ENCODE measurements at regions of chr17 and their contacts with region 1.

Region 1: GRCh38 chr17:47099987-47100711 is 88.9 kb downstream of the CDC27 start:
- DNase-seq: peak; percentile 79 to 88 (median 86)
- H3K4me3 ChIP-seq: peak overlapping the region; percentile 55 to 93 (median 92)
- H3K4me3 Mint-ChIP-seq: peak overlapping the region; percentile 99
- H3K27ac ChIP-seq: peak overlapping the region in 1 of 2 donors; percentile 88
- H3K27ac Mint-ChIP-seq: peak overlapping the region; percentile 84 to 97 (median 94)
- H3K4me1 ChIP-seq: peaks cover 12 to 16% of the 10 kb centered on the region in 2 donors
- H3K4me1 Mint-ChIP-seq: peaks cover 25% of the 10 kb centered on the region
- H3K27me3 ChIP-seq: no peaks in the 10 kb centered on the region
- H3K27me3 Mint-ChIP-seq: peaks cover 0 to 4% (median 0%) of the 10 kb centered on the region in 3 donors
- CTCF ChIP-seq: no peak

Region 2: DNA sequence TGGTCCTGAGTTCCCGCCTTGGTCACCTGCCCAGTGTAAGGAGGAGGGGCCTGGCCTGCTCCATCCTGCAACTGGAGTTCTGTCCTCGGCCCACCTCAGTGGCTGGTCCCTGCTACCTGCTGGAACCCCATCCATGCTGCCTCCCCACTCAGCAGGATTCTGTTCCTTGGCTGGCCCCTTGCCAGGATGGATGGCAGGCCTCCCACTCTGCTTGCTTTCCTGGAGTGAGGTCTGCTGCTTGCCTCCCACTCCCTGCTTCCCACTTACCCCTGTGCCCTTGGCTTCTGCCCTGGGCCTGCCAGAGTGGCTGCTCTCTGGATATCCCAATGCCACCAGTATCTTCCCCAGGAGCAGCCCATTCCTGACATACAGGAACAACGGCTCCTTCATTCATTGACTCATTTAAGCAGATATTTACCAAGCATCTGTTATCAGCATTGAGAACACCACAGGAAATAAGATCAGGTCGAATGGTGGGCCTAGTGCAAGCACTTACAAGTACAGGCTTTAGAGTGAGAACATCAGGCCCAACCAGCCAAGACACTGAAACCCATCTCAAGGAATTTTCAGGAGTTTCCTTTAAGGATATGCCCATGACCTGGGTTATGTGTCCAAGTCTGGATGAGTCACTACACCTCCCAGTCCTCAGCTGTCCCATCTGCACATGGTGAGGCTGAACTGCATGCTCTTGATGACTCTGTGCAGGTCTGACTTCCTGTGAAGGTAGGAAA is 104.1 kb before region 1 on chr17:
- intact Hi-C with region 1: no loop called
- DNase-seq: no peak
- H3K4me3 ChIP-seq: no peak overlapping the region
- H3K4me3 Mint-ChIP-seq: no peak overlapping the region
- H3K27ac ChIP-seq: no peak overlapping the region
- H3K27ac Mint-ChIP-seq: no peak overlapping the region
- H3K4me1 ChIP-seq: no peaks in the 10 kb centered on the region
- H3K4me1 Mint-ChIP-seq: no peaks in the 10 kb centered on the region
- H3K27me3 ChIP-seq: no peaks in the 10 kb centered on the region
- H3K27me3 Mint-ChIP-seq: peaks cover 2 to 6% (median 2%) of the 10 kb centered on the region in 3 donors
- CTCF ChIP-seq: no peak

Region 3: DNA sequence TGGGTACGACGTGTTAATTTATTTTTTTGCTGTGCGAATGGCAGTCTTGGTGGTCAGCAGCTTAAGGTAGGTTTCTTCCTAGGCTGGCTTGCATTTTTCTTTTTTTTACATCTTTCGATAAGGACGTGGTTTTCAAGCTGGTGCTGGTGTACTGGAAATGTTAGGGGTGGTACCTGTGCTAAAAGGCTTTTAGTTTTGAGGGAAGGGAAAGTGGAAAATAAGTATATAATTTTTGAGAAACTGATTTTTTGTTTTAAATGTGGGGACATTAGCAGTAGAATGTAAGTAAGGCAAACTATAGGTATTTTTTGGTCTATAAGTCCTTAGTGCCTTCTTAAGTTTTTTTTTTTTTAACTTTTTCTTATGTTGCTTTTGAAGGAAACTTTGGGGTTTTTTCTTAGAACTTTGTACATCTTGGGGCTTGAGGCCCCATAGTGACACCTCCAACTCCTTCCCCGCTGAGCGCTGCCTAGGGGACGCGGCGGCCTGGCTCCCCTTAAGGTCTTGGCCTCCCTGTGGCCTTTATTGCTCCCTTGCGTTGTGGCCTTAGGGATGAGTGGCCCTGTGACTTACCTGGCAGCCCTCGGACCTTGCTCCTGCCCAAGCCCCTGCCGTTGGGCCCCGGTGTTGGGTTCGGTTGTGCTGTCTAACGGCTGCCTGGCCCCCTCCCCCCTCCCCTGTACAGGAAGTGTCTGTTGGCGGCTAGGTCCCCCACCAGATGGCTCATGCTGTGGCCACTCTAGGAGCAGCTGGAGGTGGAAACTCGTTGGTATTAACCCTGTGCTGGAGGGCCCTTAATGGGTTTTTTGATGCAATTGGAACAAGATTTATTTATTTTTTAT is 33.1 kb before region 1 on chr17:
- intact Hi-C with region 1: loop called in 1 of 2 experiments (anchors 5 kb)
- DNase-seq: peak; percentile 67 to 75 (median 74)
- H3K4me3 ChIP-seq: peak overlapping the region; percentile 62 to 81 (median 74)
- H3K4me3 Mint-ChIP-seq: peak overlapping the region; percentile 86 to 95
- H3K27ac ChIP-seq: peak overlapping the region; percentile 71 to 80
- H3K27ac Mint-ChIP-seq: peak overlapping the region; percentile 81 to 95 (median 92)
- H3K4me1 ChIP-seq: peaks cover 27 to 30% of the 10 kb centered on the region in 2 donors
- H3K4me1 Mint-ChIP-seq: peaks cover 32% of the 10 kb centered on the region
- H3K27me3 ChIP-seq: no peaks in the 10 kb centered on the region
- H3K27me3 Mint-ChIP-seq: peaks cover 0 to 2% (median 1%) of the 10 kb centered on the region in 3 donors
- CTCF ChIP-seq: peak; percentile 3

Region 4: DNA sequence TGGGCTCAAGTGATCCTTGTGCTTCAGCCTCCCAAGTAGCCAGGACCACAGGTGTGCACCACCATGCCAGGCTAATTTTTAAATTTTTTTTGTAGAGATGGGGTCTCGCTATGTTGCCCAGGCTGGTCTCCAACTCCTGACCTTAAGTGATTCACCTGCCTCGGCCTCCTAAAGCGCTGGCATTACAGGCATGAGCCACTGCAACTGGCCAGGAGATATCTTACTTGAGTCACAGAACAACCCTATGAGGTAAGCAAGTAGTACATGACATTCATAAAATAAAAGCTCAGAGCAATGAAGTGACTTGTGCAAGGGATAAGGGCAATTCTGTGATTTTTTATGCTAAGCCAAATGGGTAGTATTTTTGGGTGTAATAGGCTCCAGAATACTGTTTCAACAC is 31.6 kb after region 1 on chr17:
- intact Hi-C with region 1: no loop called
- DNase-seq: no peak
- H3K4me3 ChIP-seq: no peak overlapping the region
- H3K4me3 Mint-ChIP-seq: no peak overlapping the region
- H3K27ac ChIP-seq: no peak overlapping the region
- H3K27ac Mint-ChIP-seq: no peak overlapping the region
- H3K4me1 ChIP-seq: no peaks in the 10 kb centered on the region
- H3K4me1 Mint-ChIP-seq: no peaks in the 10 kb centered on the region
- H3K27me3 ChIP-seq: no peaks in the 10 kb centered on the region
- H3K27me3 Mint-ChIP-seq: no peaks in the 10 kb centered on the region
- CTCF ChIP-seq: no peak

Region 5: GRCh38 chr17:47188876-47189731 is 89.0 kb after region 1 on chr17 and contains the start of gene CDC27:
- intact Hi-C with region 1: loop called in 1 of 2 experiments (anchors 5 kb)
- DNase-seq: peak; percentile 99 to 100 (median 99)
- H3K4me3 ChIP-seq: peak within 1 kb of the TSS; percentile 47 to 89 (median 82)
- H3K4me3 Mint-ChIP-seq: peak within 1 kb of the TSS; percentile 89 to 97
- H3K27ac ChIP-seq: peak within 1 kb of the TSS; percentile 98 to 99
- H3K27ac Mint-ChIP-seq: peak within 1 kb of the TSS; percentile 99 to 100 (median 99)
- H3K4me1 ChIP-seq: peaks cover 10 to 29% of the 10 kb centered on the region in 2 donors
- H3K4me1 Mint-ChIP-seq: peaks cover 38% of the 10 kb centered on the region
- H3K27me3 ChIP-seq: no peaks in the 10 kb centered on the region
- H3K27me3 Mint-ChIP-seq: peaks cover 2 to 5% (median 3%) of the 10 kb centered on the region in 3 donors
- CTCF ChIP-seq: no peak
- polyA plus RNA-seq, gene CDC27: 19.7 to 52.0 (median 33.0) TPM

Measured in CD14-positive monocyte (primary cell).